ENCODE measurements at regions of chr1 and their contacts with region 1.

Region 1: GRCh38 chr1:52702886-52703787 is 5.0 kb upstream of the COA7 start:
- DNase-seq: peak; percentile 83 to 89 (median 85)
- H3K4me3 ChIP-seq: peak overlapping the region; percentile 39 to 64
- H3K4me3 Mint-ChIP-seq: peak overlapping the region; percentile 83 to 91 (median 88)
- H3K27ac ChIP-seq: peak overlapping the region; percentile 78
- H3K27ac Mint-ChIP-seq: peak overlapping the region; percentile 92 to 98 (median 96)
- H3K4me1 ChIP-seq: peaks cover 11% of the 10 kb centered on the region
- H3K4me1 Mint-ChIP-seq: peaks cover 12 to 34% (median 24%) of the 10 kb centered on the region in 4 donors
- H3K27me3 ChIP-seq: no peaks in the 10 kb centered on the region
- H3K27me3 Mint-ChIP-seq: no peaks in the 10 kb centered on the region

Region 2: DNA sequence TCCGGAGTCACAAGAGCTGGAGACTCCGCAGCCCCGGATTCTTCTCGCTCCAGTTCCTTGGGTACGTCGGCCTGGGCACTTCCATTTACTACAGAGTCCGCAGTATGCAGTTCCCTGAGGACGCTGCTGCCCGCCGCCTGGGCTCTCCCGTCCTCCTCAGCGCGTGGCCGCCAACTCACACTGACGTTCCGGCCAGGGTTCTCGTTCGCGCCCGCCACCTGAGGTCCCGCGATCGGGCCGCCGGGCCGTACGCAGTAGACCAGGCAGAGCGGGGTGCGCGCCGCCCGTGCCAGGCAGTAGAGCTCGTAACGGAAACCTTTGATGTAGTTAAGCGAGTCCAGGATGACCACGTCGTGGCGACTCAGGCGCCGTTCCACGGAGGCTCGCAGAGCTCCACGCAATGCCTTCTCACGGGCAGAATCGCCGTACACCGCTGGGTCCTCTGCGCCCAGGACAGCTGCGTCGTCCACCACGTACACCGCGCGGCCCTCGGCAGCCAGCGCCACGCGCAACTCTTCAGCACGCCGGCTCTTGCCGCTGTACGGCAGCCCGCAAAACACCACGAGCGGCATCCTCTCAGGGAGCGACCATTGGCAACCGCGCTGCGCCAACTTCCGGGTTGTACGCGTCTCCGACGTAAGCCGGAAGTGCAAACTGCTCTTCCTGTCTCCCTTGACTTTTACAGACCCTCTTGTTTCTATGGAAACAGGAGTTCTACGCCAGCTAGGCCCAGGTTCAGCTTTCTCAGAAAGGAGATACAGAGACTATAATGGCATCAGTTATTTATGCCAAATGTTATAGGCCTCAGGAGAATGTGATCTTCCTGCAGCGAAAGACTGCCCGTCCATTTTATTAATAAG is 669.7 kb before region 1 on chr1 and contains the start of gene KTI12:
- CTCF ChIA-PET with region 1: no interaction called
- POLR2A ChIA-PET with region 1: no interaction called
- intact Hi-C with region 1: loop called (anchors 2 kb)
- DNase-seq: peak; percentile 88 to 92 (median 90)
- H3K4me3 ChIP-seq: peak within 1 kb of the TSS; percentile 80 to 88
- H3K4me3 Mint-ChIP-seq: peak within 1 kb of the TSS; percentile 86 to 96 (median 93)
- H3K27ac ChIP-seq: peak within 1 kb of the TSS; percentile 81
- H3K27ac Mint-ChIP-seq: peak within 1 kb of the TSS; percentile 95 to 99 (median 96)
- H3K4me1 ChIP-seq: peaks cover 33% of the 10 kb centered on the region
- H3K4me1 Mint-ChIP-seq: peaks cover 31 to 45% (median 34%) of the 10 kb centered on the region in 4 donors
- H3K27me3 ChIP-seq: no peaks in the 10 kb centered on the region
- H3K27me3 Mint-ChIP-seq: no peaks in the 10 kb centered on the region
- total RNA-seq, gene KTI12: 14.0 to 15.6 TPM

Region 3: DNA sequence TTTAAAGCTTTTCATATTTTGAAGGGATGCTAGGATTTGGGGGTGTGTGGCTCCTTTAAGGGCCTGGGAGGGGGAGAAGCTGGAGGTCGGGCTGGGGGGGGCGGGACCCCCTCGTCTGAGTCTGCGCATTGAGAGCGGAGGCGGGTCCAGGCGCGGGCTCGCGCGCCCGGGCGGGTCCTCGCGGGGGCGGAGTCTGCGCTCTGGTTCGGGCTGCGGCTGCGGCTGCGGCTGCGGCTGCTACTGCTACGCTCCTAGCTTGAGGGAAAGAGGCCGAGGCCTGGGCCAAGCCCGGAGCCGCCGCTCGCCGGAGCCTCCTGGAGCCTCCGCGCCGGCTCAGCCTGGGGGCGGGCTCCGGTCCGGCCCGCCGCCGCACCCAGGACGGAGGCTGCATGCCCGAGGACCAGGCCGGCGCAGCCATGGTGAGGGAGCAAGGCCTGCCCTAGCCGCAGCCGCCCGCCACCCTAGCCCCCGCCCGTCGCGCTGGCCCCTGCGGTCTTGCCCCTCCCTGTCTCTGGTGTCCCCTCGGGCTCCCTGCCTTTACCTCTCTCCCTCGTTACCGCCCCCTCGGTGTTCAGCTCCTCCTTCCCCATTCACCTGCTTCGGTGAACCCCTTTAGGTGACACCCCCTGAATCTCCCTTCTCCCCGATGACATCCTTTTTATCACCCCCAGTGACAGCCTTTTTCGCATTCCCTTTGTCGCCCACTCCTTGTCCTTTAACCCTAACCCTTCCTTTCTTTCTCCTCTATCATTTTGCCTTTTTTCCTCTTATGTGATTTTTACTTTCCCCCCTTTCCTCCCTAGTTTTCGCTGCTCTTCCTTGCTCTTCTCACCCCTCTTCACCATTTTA is 23.4 kb after region 1 on chr1 and contains the start of gene ZYG11B:
- CTCF ChIA-PET with region 1: interaction called, 5 read pairs
- POLR2A ChIA-PET with region 1: interaction called, 38 read pairs
- intact Hi-C with region 1: loop called (anchors 1 kb)
- DNase-seq: peak; percentile 87 to 90 (median 89)
- H3K4me3 ChIP-seq: peak within 1 kb of the TSS; percentile 67 to 74
- H3K4me3 Mint-ChIP-seq: peak within 1 kb of the TSS; percentile 85 to 98 (median 96)
- H3K27ac ChIP-seq: peak within 1 kb of the TSS; percentile 74
- H3K27ac Mint-ChIP-seq: peak within 1 kb of the TSS; percentile 49 to 97 (median 94)
- H3K4me1 ChIP-seq: peaks cover 33% of the 10 kb centered on the region
- H3K4me1 Mint-ChIP-seq: peaks cover 35 to 41% (median 36%) of the 10 kb centered on the region in 4 donors
- H3K27me3 ChIP-seq: no peaks in the 10 kb centered on the region
- H3K27me3 Mint-ChIP-seq: peaks cover 0 to 2% of the 10 kb centered on the region in 2 donors
- total RNA-seq, gene ZYG11B: 21.7 to 23.1 TPM

Region 4: DNA sequence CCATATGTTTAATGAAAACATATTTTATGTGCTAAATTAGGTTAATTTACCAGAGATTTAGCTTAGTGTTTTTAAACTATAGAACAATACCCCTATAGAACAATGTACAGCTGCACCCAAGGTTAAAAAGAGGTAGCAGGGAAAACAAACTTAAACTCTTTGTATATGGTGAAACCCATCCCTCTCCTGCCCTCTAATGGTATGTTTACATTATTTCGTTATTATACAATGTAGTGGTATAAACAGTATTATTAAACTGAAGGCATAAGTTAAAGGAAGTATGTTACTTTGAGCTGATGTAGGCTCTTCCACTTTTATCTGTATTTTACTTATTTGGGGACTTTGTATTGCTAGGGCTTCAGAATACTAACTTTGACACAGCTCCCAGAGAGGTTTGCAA is 122.7 kb after region 1 on chr1:
- CTCF ChIA-PET with region 1: interaction called, 5 read pairs
- POLR2A ChIA-PET with region 1: interaction called, 3 read pairs
- intact Hi-C with region 1: loop called (anchors 2 kb)
- DNase-seq: no peak
- H3K4me3 ChIP-seq: no peak overlapping the region
- H3K4me3 Mint-ChIP-seq: no peak overlapping the region
- H3K27ac ChIP-seq: no peak overlapping the region
- H3K27ac Mint-ChIP-seq: peak overlapping the region in 1 of 7 donors; percentile 23
- H3K4me1 ChIP-seq: no peaks in the 10 kb centered on the region
- H3K4me1 Mint-ChIP-seq: no peaks in the 10 kb centered on the region
- H3K27me3 ChIP-seq: no peaks in the 10 kb centered on the region
- H3K27me3 Mint-ChIP-seq: no peaks in the 10 kb centered on the region

Region 5: GRCh38 chr1:52836035-52836434 is 132.9 kb after region 1 on chr1:
- CTCF ChIA-PET with region 1: no interaction called
- POLR2A ChIA-PET with region 1: no interaction called
- intact Hi-C with region 1: no loop called
- DNase-seq: no peak
- H3K4me3 ChIP-seq: no peak overlapping the region
- H3K4me3 Mint-ChIP-seq: no peak overlapping the region
- H3K27ac ChIP-seq: no peak overlapping the region
- H3K27ac Mint-ChIP-seq: no peak overlapping the region
- H3K4me1 ChIP-seq: no peaks in the 10 kb centered on the region
- H3K4me1 Mint-ChIP-seq: no peaks in the 10 kb centered on the region
- H3K27me3 ChIP-seq: no peaks in the 10 kb centered on the region
- H3K27me3 Mint-ChIP-seq: peaks cover 2 to 6% of the 10 kb centered on the region in 2 donors

Region 6: DNA sequence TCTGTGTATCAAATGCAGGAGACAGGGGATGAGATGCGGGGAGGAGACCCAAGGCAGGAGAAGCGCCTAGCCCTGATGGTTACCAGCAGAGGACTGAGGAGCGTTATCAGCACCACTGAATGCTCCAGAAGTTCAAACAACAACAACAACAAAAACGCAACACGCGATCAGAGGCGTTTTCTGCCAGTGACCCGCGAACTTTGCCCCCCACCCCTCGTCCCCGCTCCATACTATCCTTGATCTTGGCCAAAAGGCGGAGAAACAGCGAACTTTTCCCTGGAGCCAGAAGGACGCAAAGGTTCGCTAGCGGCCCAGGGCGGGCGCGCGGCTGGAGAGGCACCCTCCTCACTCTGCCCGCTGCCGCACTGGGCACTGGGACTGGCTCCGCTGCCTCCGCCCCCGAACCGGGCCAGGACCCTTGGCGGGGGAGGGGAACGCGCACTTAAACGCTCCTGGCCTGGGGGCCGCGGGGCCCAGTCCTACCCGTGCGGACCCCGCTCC is 217.7 kb after region 1 on chr1:
- CTCF ChIA-PET with region 1: interaction called, 6 read pairs
- POLR2A ChIA-PET with region 1: interaction called, 10 read pairs
- intact Hi-C with region 1: loop called (anchors 2 kb)
- DNase-seq: no peak
- H3K4me3 ChIP-seq: peak overlapping the region in 1 of 2 donors; percentile 69
- H3K4me3 Mint-ChIP-seq: peak overlapping the region; percentile 79 to 93 (median 85)
- H3K27ac ChIP-seq: peak overlapping the region; percentile 54
- H3K27ac Mint-ChIP-seq: peak overlapping the region; percentile 47 to 92 (median 67)
- H3K4me1 ChIP-seq: peaks cover 29% of the 10 kb centered on the region
- H3K4me1 Mint-ChIP-seq: peaks cover 26 to 35% (median 27%) of the 10 kb centered on the region in 4 donors
- H3K27me3 ChIP-seq: no peaks in the 10 kb centered on the region
- H3K27me3 Mint-ChIP-seq: no peaks in the 10 kb centered on the region